Heart right ventricle (tissue), 16 donors: ENCODE measurements at regions of chr11 and their contacts with region 1.

Region 1: GRCh38 chr11:7892840-7893254 is 38.2 kb downstream of the OR10A6 start:
- DNase-seq: no peak
- ATAC-seq: peak in 3 of 8 donors; percentile 24 to 48 (median 44)
- H3K4me3 ChIP-seq: no peak overlapping the region
- H3K27ac ChIP-seq: no peak overlapping the region
- H3K4me1 ChIP-seq: peaks cover 0 to 21% (median 0%) of the 10 kb centered on the region in 9 donors
- H3K27me3 ChIP-seq: peaks cover 0 to 8% (median 0%) of the 10 kb centered on the region in 7 donors
- CTCF ChIP-seq: peak; percentile 28 to 76 (median 67)

Region 2: GRCh38 chr11:7986768-7987559 is 94.1 kb after region 1 on chr11 and contains the start of gene EIF3F:
- intact Hi-C with region 1: loop called (anchors 2 to 10 kb)
- DNase-seq: peak; percentile 78 to 99
- ATAC-seq: peak; percentile 98 to 100 (median 100)
- H3K4me3 ChIP-seq: peak within 1 kb of the TSS; percentile 56 to 98 (median 78)
- H3K27ac ChIP-seq: peak within 1 kb of the TSS in 9 of 10 donors; percentile 66 to 86 (median 75)
- H3K4me1 ChIP-seq: peaks cover 7 to 41% (median 26%) of the 10 kb centered on the region in 9 donors
- H3K27me3 ChIP-seq: no peaks in the 10 kb centered on the region
- CTCF ChIP-seq: peak; percentile 74 to 97 (median 86)
- total RNA-seq, gene EIF3F: 142 to 176 (median 157) TPM

Region 3: DNA sequence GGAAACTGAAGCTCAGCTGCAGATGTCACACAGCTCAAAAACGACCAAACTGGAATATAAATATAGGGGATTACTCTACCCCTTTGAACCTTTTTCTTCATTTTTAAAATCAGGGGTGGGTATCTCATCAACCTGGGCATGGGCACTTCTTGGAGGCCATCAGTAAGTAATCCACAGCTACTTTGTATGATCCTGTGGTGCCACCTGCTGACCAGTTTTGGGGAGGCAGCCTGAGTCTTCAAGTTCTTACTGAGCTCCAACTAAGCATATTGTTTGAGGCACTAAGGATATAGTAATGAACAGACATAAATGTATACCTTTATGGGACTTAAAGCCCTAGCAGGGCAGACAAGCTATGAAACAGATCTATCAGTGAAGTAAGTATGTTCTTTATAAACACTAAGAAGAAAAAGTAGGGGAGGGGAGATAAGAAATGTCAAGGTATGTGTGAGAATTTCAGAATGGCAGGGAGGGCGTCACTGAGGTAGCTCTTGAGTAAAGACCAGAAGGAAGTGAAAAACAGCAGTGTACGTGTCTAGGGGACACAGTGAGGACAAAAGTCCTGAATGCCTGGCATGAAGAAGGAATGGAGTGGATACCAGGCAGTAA is 206.5 kb after region 1 on chr11:
- intact Hi-C with region 1: loop called in 5 of 10 experiments (anchors 5 to 10 kb)
- DNase-seq: peak; percentile 68 to 76
- ATAC-seq: peak in 7 of 8 donors; percentile 37 to 66 (median 63)
- H3K4me3 ChIP-seq: no peak overlapping the region
- H3K27ac ChIP-seq: no peak overlapping the region
- H3K4me1 ChIP-seq: no peaks in the 10 kb centered on the region
- H3K27me3 ChIP-seq: no peaks in the 10 kb centered on the region
- CTCF ChIP-seq: peak; percentile 60 to 89 (median 82)